GM13977 (cell line): ENCODE measurements at regions of chr5 and their contacts with region 1.

Region 1: DNA sequence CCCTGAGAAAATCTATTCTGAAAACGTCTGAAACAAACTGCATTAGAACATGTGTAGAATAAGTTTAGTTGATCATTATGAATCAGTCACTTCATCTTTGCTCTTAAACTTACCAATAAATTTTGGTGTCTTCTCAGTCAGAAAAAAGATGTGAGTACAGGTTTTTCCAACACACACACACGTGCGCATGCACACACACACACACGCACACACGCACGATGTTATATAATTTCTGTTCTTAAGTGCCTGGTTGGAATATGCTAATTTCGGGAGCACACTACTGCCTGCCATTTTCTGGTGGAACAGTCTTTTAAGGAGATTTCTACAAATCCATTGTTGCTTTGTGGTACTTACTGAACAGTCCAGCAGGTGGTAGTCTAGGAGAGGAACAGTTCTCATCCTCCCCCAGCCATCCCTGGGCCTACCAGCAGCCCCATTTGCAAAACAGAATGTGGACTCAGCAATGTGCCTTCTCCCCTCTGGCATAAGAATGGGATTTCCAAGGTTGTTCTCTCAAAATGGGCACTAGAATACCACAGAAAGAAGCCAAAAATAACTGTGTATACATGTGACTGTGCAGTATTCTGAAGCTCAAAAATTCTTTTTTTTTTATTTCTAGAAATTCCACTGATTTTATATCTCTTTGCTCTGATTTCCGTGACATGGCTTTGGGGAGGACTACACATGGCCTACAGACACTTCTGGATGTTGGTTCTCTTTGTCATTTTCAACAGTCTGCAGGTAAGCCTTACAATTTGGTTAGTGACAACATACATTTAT is 281.3 kb downstream of the ARRDC3 start:
- DNase-seq: peak; percentile 39
- CTCF ChIP-seq: peak; percentile 66

Region 2: GRCh38 chr5:91219803-91220371 is 118.1 kb after region 1 on chr5:
- in situ Hi-C with region 1: loop called (anchors 10 kb)
- DNase-seq: peak; percentile 21
- CTCF ChIP-seq: peak; percentile 45